ENCODE measurements at regions of chr3 and their contacts with region 1.

Region 1: GRCh38 chr3:52278510-52279069 is at the start of gene WDR82:
- DNase-seq: peak; percentile 100
- ATAC-seq: peak; percentile 78
- H3K4me3 Mint-ChIP-seq: peak within 1 kb of the TSS; percentile 99
- H3K27ac Mint-ChIP-seq: peak within 1 kb of the TSS; percentile 99
- H3K4me1 Mint-ChIP-seq: peaks cover 56% of the 10 kb centered on the region
- H3K27me3 Mint-ChIP-seq: no peaks in the 10 kb centered on the region
- total RNA-seq, gene WDR82: 95.2 to 113 TPM

Region 2: DNA sequence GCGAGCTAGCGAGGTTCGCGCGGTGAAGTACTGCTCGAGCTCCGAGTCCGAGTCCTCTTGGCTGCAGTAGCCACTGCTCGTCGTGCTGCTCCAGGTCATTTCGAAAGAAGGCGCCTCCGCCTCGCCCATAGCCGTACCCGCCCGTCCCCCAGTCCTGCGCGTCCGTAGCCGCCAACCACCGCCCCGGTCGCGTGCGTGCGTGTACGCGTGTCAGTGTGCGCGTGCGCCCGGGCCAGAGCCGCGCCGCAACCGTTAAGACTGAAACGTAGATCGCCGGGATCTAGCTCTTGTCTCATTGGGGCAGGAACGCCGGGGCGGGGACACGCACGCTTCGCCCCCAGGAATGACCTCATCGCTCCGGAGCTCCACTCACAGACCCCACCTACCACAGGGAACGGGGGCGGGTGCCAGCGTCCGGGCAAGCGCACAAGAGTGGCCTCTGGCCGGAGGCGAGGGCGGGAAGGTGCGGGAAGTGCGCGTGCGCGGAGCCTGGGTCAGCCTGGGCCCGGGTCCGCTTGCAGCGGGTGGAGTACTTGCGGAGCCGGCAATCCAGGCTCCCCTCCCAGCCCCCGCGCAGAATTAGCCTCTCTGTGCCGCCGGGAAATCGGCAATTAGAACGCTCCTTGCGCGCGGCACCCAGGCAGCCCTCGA is 1941.3 kb before region 1 on chr3:
- CTCF ChIA-PET with region 1: no interaction called
- POLR2A ChIA-PET with region 1: no interaction called
- intact Hi-C with region 1: loop called in 1 of 2 experiments (anchors 5 kb)
- DNase-seq: peak; percentile 99
- ATAC-seq: peak; percentile 82
- H3K4me3 Mint-ChIP-seq: peak overlapping the region; percentile 83
- H3K27ac Mint-ChIP-seq: peak overlapping the region; percentile 91
- H3K4me1 Mint-ChIP-seq: peaks cover 50% of the 10 kb centered on the region
- H3K27me3 Mint-ChIP-seq: no peaks in the 10 kb centered on the region

Region 3: DNA sequence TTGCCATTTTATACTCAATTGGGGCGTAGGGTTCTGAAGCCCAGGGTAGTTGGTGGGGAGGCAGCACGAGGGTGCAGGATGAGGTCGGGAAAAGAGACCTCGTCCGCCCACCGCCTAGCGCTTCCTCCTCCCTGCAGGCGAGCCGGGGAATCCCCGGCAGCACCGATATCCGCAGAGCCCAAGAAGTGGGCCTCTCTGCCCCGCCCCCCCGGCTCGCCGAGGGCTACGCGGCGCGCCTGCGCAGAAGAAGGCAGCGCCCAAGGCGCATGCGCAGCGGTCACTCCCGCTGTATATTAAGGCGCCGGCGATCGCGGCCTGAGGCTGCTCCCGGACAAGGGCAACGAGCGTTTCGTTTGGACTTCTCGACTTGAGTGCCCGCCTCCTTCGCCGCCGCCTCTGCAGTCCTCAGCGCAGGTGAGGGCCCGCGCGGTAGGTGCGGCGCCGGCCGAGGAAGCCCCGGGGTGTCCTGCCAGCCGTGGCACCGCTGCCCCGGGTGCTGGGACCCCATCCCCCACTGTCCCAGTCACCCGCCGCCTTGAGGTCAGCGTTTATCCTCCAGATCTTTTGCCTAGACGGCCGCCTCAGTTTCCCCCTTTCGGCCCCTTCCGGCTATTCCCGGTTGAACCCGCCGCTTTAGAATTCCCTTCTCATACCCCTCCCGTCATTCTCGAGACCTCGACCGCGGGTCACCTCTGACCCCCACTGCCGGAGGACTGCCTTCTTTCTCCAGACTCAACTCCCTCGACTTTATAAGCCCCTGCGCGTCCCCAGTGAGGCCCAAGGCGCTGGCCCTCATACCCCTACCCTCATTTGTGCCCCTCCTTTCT is 80.5 kb before region 1 on chr3 and contains the start of gene ALAS1:
- CTCF ChIA-PET with region 1: interaction called, 5 read pairs
- POLR2A ChIA-PET with region 1: interaction called, 3 read pairs
- intact Hi-C with region 1: loop called in 1 of 2 experiments (anchors 2 kb)
- DNase-seq: peak; percentile 97
- ATAC-seq: peak; percentile 95
- H3K4me3 Mint-ChIP-seq: peak within 1 kb of the TSS; percentile 96
- H3K27ac Mint-ChIP-seq: peak within 1 kb of the TSS; percentile 91
- H3K4me1 Mint-ChIP-seq: peaks cover 48% of the 10 kb centered on the region
- H3K27me3 Mint-ChIP-seq: no peaks in the 10 kb centered on the region
- total RNA-seq, gene ALAS1: 52.8 to 68.7 TPM

Region 4: DNA sequence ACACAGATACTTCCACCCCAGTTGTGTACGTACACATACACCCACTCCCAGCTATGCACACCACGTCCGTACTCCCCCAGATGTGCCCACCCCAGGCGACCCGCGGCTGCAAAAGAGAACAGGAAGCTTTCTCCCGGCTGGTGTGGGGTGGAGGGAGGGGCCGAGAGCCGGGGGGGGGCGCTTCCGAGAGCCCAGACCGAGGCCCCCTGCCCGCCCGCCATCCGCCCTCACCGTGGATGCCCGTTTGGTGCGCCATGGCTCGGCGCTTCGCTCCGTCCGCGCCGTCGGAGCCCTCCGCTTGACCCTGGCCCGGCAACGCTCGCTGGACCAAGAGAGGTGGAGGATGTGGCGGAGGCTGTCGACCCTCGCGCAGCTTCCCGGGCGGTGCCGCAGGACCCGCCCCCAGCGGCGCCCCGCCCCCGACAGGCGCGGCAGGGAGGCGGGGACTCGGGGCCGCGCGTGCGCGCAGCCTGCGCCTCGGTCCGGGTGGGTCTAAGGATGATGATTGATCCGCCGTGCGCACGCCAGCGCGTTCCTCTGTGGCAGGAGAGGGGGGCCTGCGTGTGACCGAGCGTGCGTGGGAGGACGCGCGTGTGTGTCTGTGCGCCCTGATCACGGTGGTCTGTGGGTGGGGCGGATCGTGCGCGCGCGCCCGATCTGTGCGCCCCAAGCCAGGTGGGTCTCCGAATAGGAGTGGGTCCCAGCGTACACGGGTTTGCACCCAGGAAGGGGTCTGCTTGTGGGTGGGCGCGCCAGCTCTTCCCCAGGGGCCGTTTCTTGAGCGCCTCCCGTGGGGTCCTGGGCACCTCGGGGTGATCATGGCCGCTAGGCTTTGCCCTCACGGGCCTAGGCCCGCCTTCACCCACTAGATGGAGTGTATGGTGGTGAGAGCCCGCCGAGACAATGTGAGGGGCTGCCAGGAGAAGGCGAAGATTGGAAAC is 39.6 kb before region 1 on chr3 and contains the start of gene TWF2:
- CTCF ChIA-PET with region 1: interaction called, 34 read pairs
- POLR2A ChIA-PET with region 1: interaction called, 25 read pairs
- intact Hi-C with region 1: loop called (anchors 1 kb)
- DNase-seq: peak; percentile 92
- ATAC-seq: peak; percentile 67
- H3K4me3 Mint-ChIP-seq: peak within 1 kb of the TSS; percentile 99
- H3K27ac Mint-ChIP-seq: peak within 1 kb of the TSS; percentile 99
- H3K4me1 Mint-ChIP-seq: peaks cover 70% of the 10 kb centered on the region
- H3K27me3 Mint-ChIP-seq: no peaks in the 10 kb centered on the region
- total RNA-seq, gene TWF2: 85.0 to 93.5 TPM

Region 5: DNA sequence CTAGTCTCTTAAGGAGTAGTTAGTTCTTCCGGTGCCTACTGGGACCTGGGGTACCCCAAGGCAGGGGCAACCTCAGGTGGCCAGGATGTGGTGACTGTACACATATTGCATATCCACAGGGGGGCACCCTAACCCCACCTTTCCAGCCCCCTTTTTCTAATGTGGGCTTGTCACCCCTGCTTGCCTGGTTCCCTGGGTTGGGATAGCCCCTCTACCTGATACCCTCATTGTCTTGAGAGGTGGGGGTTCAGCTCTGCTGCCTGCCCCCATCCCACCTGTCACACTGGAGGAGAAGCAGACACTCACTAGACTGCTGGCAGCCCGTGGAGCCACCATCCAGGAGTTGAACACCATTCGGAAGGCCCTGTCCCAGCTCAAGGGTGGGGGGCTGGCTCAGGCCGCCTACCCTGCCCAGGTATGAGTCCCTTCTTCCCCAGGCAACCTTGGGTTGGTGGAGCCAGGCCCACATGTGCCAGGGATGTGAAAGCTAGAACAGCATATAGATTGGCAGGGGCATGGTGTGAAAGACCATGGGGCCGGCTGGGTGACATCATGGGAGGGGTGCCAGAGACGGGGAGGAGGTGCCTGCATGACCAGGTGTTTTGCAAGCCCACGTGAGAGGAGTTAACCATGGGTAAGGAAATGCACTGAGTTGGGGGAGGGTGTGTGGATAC is 13.1 kb after region 1 on chr3:
- CTCF ChIA-PET with region 1: interaction called, 25 read pairs
- POLR2A ChIA-PET with region 1: interaction called, 21 read pairs
- intact Hi-C with region 1: loop called (anchors 1 kb)
- DNase-seq: peak; percentile 66
- ATAC-seq: no peak
- H3K4me3 Mint-ChIP-seq: no peak overlapping the region
- H3K27ac Mint-ChIP-seq: no peak overlapping the region
- H3K4me1 Mint-ChIP-seq: peaks cover 16% of the 10 kb centered on the region
- H3K27me3 Mint-ChIP-seq: no peaks in the 10 kb centered on the region

Region 6: GRCh38 chr3:52310861-52311575 is 32.4 kb after region 1 on chr3:
- CTCF ChIA-PET with region 1: no interaction called
- POLR2A ChIA-PET with region 1: no interaction called
- intact Hi-C with region 1: no loop called
- DNase-seq: peak; percentile 58
- ATAC-seq: peak; percentile 83
- H3K4me3 Mint-ChIP-seq: no peak overlapping the region
- H3K27ac Mint-ChIP-seq: peak overlapping the region; percentile 42
- H3K4me1 Mint-ChIP-seq: peaks cover 44% of the 10 kb centered on the region
- H3K27me3 Mint-ChIP-seq: no peaks in the 10 kb centered on the region

Region 7: GRCh38 chr3:52685709-52686691 is 407.4 kb after region 1 on chr3 and contains the starts of genes GNL3 and PBRM1:
- CTCF ChIA-PET with region 1: no interaction called
- POLR2A ChIA-PET with region 1: no interaction called
- intact Hi-C with region 1: loop called (anchors 5 to 10 kb)
- DNase-seq: peak; percentile 97
- ATAC-seq: peak; percentile 70
- H3K4me3 Mint-ChIP-seq: peak within 1 kb of the TSS; percentile 99
- H3K27ac Mint-ChIP-seq: peak within 1 kb of the TSS; percentile 99
- H3K4me1 Mint-ChIP-seq: peaks cover 75% of the 10 kb centered on the region
- H3K27me3 Mint-ChIP-seq: no peaks in the 10 kb centered on the region
- total RNA-seq, gene GNL3: 206 to 218 TPM
- total RNA-seq, gene PBRM1: 57.6 to 59.8 TPM